ENCODE measurements at regions of chr7 and their contacts with region 1.

Region 1: GRCh38 chr7:17971411-17971810 is 31.1 kb upstream of the SNX13 start:
- DNase-seq: peak; percentile 41
- ATAC-seq: no peak
- H3K4me3 ChIP-seq: no peak overlapping the region
- H3K27ac ChIP-seq: no peak overlapping the region
- H3K4me1 ChIP-seq: peaks cover 13% of the 10 kb centered on the region
- H3K27me3 ChIP-seq: no peaks in the 10 kb centered on the region
- CTCF ChIP-seq: peak; percentile 57

Region 2: DNA sequence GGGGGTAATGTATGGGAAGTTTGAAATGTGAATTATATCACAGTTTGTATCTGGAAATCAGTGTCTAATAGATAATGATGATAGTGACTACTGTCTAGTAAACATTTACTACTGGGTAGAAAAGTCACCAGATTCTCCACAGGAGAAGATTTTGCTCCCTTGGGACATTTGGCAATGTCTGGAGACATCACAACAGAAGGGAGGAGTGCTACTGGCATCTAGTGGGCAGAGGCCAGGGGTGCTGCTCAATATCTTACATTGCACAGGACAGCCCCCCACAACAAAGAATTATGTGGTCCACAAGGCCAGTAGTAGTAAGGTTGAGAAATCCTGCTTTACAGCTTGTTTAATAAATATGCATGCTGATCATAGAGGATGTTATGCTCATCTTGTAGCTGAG is 148.6 kb after region 1 on chr7:
- CTCF ChIA-PET with region 1: no interaction called
- POLR2A ChIA-PET with region 1: no interaction called
- intact Hi-C with region 1: loop called (anchors 1 kb)
- DNase-seq: peak; percentile 38
- ATAC-seq: peak; percentile 71
- H3K4me3 ChIP-seq: no peak overlapping the region
- H3K27ac ChIP-seq: no peak overlapping the region
- H3K4me1 ChIP-seq: no peaks in the 10 kb centered on the region
- H3K27me3 ChIP-seq: no peaks in the 10 kb centered on the region
- CTCF ChIP-seq: peak; percentile 64

Measured in PC-3 (cell line).